HCT116 (cell line): ENCODE measurements at regions of chr15 and their contacts with region 1.

Region 1: GRCh38 chr15:44536962-44537734 is at the start of gene EIF3J:
- DNase-seq: peak; percentile 89
- ATAC-seq: peak; percentile 90
- H3K4me3 ChIP-seq: peak within 1 kb of the TSS; percentile 69 to 73
- H3K27ac ChIP-seq: peak within 1 kb of the TSS; percentile 97
- H3K4me1 ChIP-seq: peaks cover 9 to 32% of the 10 kb centered on the region in 2 experiments; a peak in 3 of 4 replicates
- H3K27me3 ChIP-seq: no peaks in the 10 kb centered on the region
- CTCF ChIP-seq: no peak
- POLR2A ChIP-seq: no peak
- RAD21 ChIP-seq: no peak
- total RNA-seq, gene EIF3J: 68.6 TPM

Region 2: GRCh38 chr15:44426975-44427755 is 110.0 kb before region 1 on chr15 and contains the start of gene CTDSPL2:
- CTCF ChIA-PET with region 1: interaction called, 3 read pairs
- POLR2A ChIA-PET with region 1: interaction called, 3 read pairs
- RAD21 ChIA-PET with region 1: no interaction called
- intact Hi-C with region 1: loop called (anchors 1 kb)
- DNase-seq: peak; percentile 97
- ATAC-seq: peak; percentile 97
- H3K4me3 ChIP-seq: peak within 1 kb of the TSS; percentile 96 to 99
- H3K27ac ChIP-seq: peak within 1 kb of the TSS; percentile 89
- H3K4me1 ChIP-seq: peaks cover 7 to 21% of the 10 kb centered on the region in 2 experiments
- H3K27me3 ChIP-seq: no peaks in the 10 kb centered on the region
- CTCF ChIP-seq: peak in 2 of 3 experiments; percentile 19 to 28; a peak in 2 of 6 replicates
- POLR2A ChIP-seq: peak; percentile 50
- RAD21 ChIP-seq: no peak
- total RNA-seq, gene CTDSPL2: 56.0 TPM

Region 3: GRCh38 chr15:44471885-44472455 is 65.2 kb before region 1 on chr15:
- CTCF ChIA-PET with region 1: no interaction called
- POLR2A ChIA-PET with region 1: no interaction called
- RAD21 ChIA-PET with region 1: no interaction called
- intact Hi-C with region 1: no loop called
- DNase-seq: no peak
- ATAC-seq: no peak
- H3K4me3 ChIP-seq: no peak overlapping the region
- H3K27ac ChIP-seq: no peak overlapping the region
- H3K4me1 ChIP-seq: no peaks in the 10 kb centered on the region; a peak in 1 of 4 replicates
- H3K27me3 ChIP-seq: no peaks in the 10 kb centered on the region
- CTCF ChIP-seq: no peak
- POLR2A ChIP-seq: no peak
- RAD21 ChIP-seq: no peak